Testis (tissue), 5 donors: ENCODE measurements at regions of chr1 and their contacts with region 1.

Region 1: GRCh38 chr1:153572569-153573015 is 6.9 kb upstream of the S100A2 start:
- DNase-seq: peak; percentile 91
- H3K4me3 ChIP-seq: no peak overlapping the region
- H3K27ac ChIP-seq: peak overlapping the region in 1 of 2 donors; percentile 50
- H3K4me1 ChIP-seq: peaks cover 6% of the 10 kb centered on the region
- H3K27me3 ChIP-seq: no peaks in the 10 kb centered on the region
- CTCF ChIP-seq: peak; percentile 51 to 67 (median 65)
- POLR2A ChIP-seq: no peak

Region 2: DNA sequence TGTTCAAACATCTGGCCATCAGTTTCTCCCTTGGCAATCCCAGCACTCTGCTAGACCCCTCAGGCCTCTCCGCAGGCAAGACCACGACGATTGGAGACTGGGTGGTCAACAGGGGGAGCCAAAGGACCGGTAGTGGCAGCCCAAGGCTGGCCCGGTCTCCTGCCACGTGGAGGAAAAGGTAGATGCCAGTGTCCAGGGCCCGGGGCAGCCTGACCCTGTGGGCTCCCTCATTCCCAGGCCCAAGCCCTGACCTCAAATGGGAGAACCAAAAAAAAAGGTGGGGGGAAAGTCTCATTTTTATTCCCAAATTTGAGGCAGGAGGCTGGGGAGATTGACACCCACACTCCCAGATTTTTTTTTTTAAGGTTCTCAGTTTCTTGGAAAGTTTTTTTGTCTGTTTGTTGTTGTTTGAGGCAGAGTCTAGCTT is 61.6 kb before region 1 on chr1:
- intact Hi-C with region 1: loop called (anchors 5 kb)
- DNase-seq: peak; percentile 83
- H3K4me3 ChIP-seq: no peak overlapping the region
- H3K27ac ChIP-seq: no peak overlapping the region
- H3K4me1 ChIP-seq: peaks cover 27% of the 10 kb centered on the region
- H3K27me3 ChIP-seq: no peaks in the 10 kb centered on the region
- CTCF ChIP-seq: peak; percentile 51 to 76 (median 73)
- POLR2A ChIP-seq: no peak

Region 3: DNA sequence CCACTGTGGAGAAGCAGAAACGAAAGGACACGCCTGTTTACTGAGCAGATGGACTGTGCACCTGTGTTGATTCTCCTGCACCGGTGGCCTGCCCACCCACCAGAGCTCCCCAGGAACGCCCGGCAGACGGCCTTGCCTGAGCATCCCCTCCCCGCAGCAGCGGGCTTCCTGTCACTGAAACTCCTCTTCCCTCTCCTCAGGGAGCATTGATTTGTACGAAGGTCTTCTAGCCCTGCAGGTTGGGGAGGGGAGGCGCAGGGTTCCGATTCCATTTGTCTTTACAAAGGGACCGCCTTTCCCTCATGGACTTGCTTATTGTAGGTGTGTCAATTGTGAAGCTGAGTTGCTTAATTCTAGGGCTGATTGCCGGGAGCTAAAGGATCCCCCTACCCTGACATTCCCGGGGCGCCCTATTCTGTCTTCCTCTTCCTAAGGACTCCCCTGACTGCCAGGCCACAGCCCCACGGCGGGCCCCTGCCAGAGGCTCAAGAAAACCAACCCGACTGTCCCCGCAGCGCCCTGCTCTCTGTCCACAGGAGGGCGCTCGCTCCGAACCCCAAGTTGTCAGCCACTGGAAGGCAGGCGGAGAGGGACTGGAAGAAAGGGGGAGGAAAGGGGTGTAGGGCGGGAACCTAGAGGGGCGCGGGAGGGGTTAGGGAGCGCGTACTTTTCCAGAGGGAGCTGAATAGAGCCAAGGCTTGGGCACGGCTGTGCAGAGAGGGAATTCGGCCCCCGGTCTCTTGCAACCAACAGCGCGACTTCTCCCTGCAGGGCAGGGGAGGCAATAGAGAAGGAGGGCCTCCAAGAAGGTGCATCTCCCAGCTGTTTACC is 39.6 kb before region 1 on chr1:
- intact Hi-C with region 1: loop called (anchors 5 kb)
- DNase-seq: peak; percentile 85
- H3K4me3 ChIP-seq: peak overlapping the region in 1 of 2 donors; percentile 36
- H3K27ac ChIP-seq: peak overlapping the region in 1 of 2 donors; percentile 96
- H3K4me1 ChIP-seq: peaks cover 15% of the 10 kb centered on the region
- H3K27me3 ChIP-seq: no peaks in the 10 kb centered on the region
- CTCF ChIP-seq: peak; percentile 54 to 83 (median 81)
- POLR2A ChIP-seq: no peak

Region 4: DNA sequence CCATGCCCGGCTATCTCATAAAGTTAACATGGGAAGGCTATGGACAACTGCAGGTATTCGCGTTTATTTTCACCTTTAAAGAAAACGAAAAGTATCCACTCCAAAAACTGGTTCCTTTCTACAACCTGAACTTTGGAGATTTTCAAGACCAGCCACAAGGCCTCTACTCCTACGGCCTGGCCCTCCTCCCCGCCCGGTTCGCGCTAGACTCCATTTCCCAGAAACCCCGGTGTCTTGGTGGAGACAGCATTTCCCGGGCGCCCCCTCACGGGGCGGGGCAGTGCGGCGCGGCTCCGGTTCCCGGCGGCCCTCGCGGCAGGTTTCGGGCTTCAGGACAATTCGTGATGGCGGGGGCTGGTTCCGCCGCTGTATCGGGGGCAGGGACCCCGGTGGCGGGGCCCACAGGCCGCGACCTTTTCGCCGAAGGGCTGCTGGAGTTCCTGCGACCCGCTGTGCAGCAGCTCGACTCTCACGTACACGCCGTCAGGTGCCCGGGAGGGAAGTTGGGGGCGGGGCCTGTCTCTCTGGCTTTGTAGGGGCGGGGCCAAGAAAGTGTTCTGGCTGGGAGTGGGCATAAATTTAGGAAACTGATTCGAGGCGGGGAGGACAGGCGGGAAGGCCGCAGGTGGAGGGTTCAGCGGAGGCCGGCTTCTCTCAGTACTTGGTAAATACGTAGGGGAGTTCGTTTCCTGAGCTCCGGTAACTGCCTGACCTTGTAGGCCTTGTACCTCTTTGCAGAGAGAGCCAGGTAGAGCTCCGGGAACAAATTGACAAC is 86.0 kb after region 1 on chr1 and contains the start of gene SNAPIN:
- intact Hi-C with region 1: no loop called
- DNase-seq: peak; percentile 93
- H3K4me3 ChIP-seq: peak within 1 kb of the TSS; percentile 88 to 93
- H3K27ac ChIP-seq: peak within 1 kb of the TSS; percentile 98 to 99
- H3K4me1 ChIP-seq: peaks cover 5% of the 10 kb centered on the region
- H3K27me3 ChIP-seq: no peaks in the 10 kb centered on the region
- CTCF ChIP-seq: peak; percentile 11 to 41 (median 20)
- POLR2A ChIP-seq: peak; percentile 3
- total RNA-seq, gene SNAPIN: 57.4 to 61.7 TPM